Common myeloid progenitor, CD34-positive (primary cell): ENCODE measurements at regions of chr3 and their contacts with region 1.

Region 1: DNA sequence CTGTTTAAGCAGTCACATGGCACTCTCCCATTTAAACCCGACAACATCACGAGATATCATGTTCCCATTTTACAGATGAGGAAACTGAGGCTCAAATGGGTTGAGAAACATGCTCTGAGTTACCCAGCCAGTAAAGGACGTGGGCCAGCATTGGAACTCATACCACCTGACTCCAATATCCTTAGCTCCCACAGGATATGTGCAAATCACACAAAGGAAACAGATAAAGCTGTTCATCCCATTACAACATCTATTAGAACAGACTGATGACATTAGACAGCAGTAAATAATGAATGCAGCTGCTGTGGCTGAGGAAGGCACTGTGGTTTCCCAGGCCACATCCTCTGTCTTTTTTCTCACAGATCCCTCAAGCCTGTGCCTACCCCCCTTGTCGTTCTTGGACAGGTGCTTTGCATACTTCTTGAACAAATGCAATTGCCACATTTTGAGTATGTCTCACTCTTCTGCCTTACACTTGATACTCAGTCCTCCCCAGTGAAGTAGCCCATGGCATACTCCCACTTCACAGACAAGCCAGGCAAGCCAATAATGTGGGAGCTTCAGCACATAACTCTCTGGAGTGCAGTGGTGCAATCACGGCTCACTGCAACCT is 17.7 kb downstream of the FRMD4B start:
- DNase-seq: peak; percentile 69 to 98 (median 97)
- H3K4me3 ChIP-seq: peak overlapping the region in 1 of 7 experiments; percentile 1
- H3K27ac ChIP-seq: peak overlapping the region in 1 of 2 experiments; percentile 32
- H3K4me1 ChIP-seq: peaks cover 28 to 62% (median 51%) of the 10 kb centered on the region in 4 experiments
- H3K27me3 ChIP-seq: no peaks in the 10 kb centered on the region

Region 2: GRCh38 chr3:69122403-69122802 is 245.8 kb before region 1 on chr3 and contains the start of gene LMOD3:
- CTCF ChIA-PET with region 1: no interaction called
- POLR2A ChIA-PET with region 1: no interaction called
- DNase-seq: no peak
- H3K4me3 ChIP-seq: no peak within 1 kb of the TSS
- H3K27ac ChIP-seq: no peak within 1 kb of the TSS
- H3K4me1 ChIP-seq: no peaks in the 10 kb centered on the region
- H3K27me3 ChIP-seq: no peaks in the 10 kb centered on the region

Region 3: GRCh38 chr3:69260216-69260787 is 107.9 kb before region 1 on chr3:
- CTCF ChIA-PET with region 1: no interaction called
- POLR2A ChIA-PET with region 1: no interaction called
- DNase-seq: no peak
- H3K4me3 ChIP-seq: no peak overlapping the region
- H3K27ac ChIP-seq: no peak overlapping the region
- H3K4me1 ChIP-seq: no peaks in the 10 kb centered on the region
- H3K27me3 ChIP-seq: no peaks in the 10 kb centered on the region

Region 4: DNA sequence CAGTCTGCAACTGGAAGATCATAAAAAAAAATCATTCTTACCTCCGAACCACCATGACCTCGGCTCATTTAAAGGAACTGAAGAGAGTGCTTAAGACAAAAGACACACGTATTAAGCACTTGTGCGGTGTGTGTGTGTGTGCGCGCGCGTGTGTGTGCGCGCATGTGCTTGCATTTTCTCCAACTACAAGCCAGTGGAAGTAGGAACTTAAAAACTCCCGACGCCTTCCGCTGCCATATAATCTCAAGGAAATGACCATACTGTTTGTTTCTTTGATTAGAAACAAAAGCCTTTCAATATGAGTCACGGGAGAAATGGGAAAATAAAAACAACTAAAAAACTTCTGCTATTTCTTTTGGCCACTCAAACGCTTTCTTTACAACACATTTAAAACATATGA is 14.7 kb before region 1 on chr3:
- CTCF ChIA-PET with region 1: interaction called, 10 read pairs
- POLR2A ChIA-PET with region 1: interaction called, 3 read pairs
- DNase-seq: peak; percentile 80 to 88 (median 87)
- H3K4me3 ChIP-seq: peak overlapping the region in 6 of 7 experiments; percentile 62 to 97 (median 76)
- H3K27ac ChIP-seq: peak overlapping the region; percentile 59 to 83
- H3K4me1 ChIP-seq: peaks cover 17 to 50% (median 22%) of the 10 kb centered on the region in 4 experiments
- H3K27me3 ChIP-seq: no peaks in the 10 kb centered on the region

Region 5: GRCh38 chr3:69379661-69380060 is 11.4 kb after region 1 on chr3:
- CTCF ChIA-PET with region 1: interaction called, 104 read pairs
- POLR2A ChIA-PET with region 1: interaction called, 3 read pairs
- DNase-seq: no peak
- H3K4me3 ChIP-seq: no peak overlapping the region
- H3K27ac ChIP-seq: no peak overlapping the region
- H3K4me1 ChIP-seq: peaks cover 5 to 14% (median 11%) of the 10 kb centered on the region in 4 experiments
- H3K27me3 ChIP-seq: no peaks in the 10 kb centered on the region

Region 6: DNA sequence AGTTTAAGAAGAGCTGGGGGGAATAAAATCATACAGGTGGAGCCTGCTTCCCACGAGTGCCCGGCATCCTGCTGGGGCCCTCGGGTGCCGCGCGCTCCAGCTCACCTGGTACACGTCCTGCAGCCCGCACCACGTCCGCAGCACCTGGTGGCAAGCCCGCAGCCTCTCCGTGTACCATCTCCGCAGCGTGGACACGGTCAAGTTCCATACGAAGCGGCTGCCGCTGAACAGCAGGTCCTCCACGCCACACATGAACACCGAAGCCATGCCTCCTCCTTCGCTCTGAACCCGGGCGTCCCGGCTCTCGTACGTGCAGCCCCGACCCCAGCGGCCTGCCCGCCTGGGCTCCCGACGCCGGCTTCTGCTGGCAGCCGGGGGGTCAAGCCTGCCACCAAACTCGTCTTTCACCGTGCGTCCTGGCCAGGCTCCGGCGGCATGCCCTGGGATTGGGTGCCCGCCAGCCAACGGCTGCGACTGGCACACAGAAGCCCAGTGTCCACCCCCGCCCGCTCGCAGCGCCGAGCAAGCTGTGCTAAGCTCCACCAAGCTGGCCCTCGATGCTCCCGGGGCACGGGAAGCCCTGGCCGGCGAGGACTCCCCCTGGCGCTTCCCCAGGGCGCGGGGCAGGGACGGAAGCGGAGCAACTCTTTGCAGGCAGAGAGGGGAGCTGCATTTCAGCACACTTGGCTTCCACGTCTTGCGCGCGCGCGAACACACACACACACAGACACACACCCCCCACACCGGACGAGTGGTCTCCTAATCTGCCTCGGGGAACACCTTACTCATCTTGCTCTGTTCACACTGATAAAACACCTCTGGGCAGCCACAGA is 17.7 kb after region 1 on chr3 and contains the start of gene FRMD4B:
- CTCF ChIA-PET with region 1: interaction called, 104 read pairs
- POLR2A ChIA-PET with region 1: no interaction called
- DNase-seq: peak; percentile 75 to 88 (median 78)
- H3K4me3 ChIP-seq: peak within 1 kb of the TSS; percentile 55 to 98 (median 86)
- H3K27ac ChIP-seq: peak within 1 kb of the TSS in 1 of 2 experiments; percentile 49
- H3K4me1 ChIP-seq: peaks cover 18 to 43% (median 36%) of the 10 kb centered on the region in 4 experiments
- H3K27me3 ChIP-seq: no peaks in the 10 kb centered on the region

Region 7: DNA sequence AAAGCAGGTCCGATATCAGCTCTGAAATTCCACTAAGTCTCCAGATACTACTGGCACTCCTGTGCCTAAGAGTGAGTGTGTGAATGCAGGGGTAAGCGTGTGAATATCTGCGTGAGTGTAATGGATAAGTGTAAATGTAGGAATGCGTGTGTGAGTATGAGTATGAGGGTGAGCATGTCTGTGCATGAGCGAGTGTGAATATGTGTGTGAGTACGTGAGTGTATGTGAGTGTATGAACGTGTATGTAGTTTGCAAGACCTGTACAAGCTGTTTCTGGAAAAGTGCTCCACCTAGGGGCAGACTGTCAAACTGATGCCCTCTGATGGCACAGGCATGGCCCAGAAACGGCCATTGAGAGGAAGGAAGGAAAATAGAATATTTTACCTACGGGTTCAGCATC is 42.0 kb after region 1 on chr3:
- CTCF ChIA-PET with region 1: interaction called, 17 read pairs
- POLR2A ChIA-PET with region 1: no interaction called
- DNase-seq: peak; percentile 81 to 89 (median 86)
- H3K4me3 ChIP-seq: peak overlapping the region in 1 of 7 experiments; percentile 14
- H3K27ac ChIP-seq: no peak overlapping the region
- H3K4me1 ChIP-seq: peaks cover 0 to 14% (median 7%) of the 10 kb centered on the region in 4 experiments
- H3K27me3 ChIP-seq: no peaks in the 10 kb centered on the region